ENCODE measurements at regions of chrX and their contacts with region 1.

Region 1: DNA sequence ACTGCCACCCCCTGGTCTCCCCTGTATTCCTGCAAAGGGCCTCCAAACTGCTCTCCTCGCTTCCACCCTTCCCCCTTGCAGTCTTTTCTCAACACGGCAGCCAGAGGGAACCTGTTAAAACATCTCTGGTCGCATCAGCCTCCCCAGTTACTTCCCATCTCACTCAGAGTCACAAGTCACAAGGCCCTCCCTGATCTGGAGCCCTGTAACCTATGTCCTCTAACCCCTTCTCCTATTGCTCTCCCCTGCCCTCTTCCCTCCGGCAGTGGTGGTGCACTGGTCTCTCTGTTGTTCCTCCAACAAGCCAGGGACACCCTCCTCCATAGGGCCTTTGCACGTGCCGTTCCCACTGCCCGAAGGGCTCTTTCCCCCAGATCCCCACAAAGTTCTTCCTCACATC is 73.2 kb downstream of the SH3KBP1 start:
- DNase-seq: peak; percentile 19 to 38
- H3K4me3 ChIP-seq: no peak overlapping the region
- H3K4me3 Mint-ChIP-seq: no peak overlapping the region
- H3K27ac Mint-ChIP-seq: no peak overlapping the region
- H3K4me1 ChIP-seq: no peaks in the 10 kb centered on the region
- H3K4me1 Mint-ChIP-seq: peaks cover 7% of the 10 kb centered on the region
- H3K27me3 ChIP-seq: no peaks in the 10 kb centered on the region
- H3K27me3 Mint-ChIP-seq: no peaks in the 10 kb centered on the region
- CTCF ChIP-seq: peak in 1 of 2 experiments; percentile 47

Region 2: GRCh38 chrX:19659925-19660324 is 154.3 kb before region 1 on chrX:
- CTCF ChIA-PET with region 1: no interaction called
- POLR2A ChIA-PET with region 1: no interaction called
- intact Hi-C with region 1: no loop called
- DNase-seq: no peak
- H3K4me3 ChIP-seq: no peak overlapping the region
- H3K4me3 Mint-ChIP-seq: no peak overlapping the region
- H3K27ac Mint-ChIP-seq: no peak overlapping the region
- H3K4me1 ChIP-seq: no peaks in the 10 kb centered on the region
- H3K4me1 Mint-ChIP-seq: peaks cover 5% of the 10 kb centered on the region
- H3K27me3 ChIP-seq: no peaks in the 10 kb centered on the region
- H3K27me3 Mint-ChIP-seq: no peaks in the 10 kb centered on the region
- CTCF ChIP-seq: no peak

Region 3: DNA sequence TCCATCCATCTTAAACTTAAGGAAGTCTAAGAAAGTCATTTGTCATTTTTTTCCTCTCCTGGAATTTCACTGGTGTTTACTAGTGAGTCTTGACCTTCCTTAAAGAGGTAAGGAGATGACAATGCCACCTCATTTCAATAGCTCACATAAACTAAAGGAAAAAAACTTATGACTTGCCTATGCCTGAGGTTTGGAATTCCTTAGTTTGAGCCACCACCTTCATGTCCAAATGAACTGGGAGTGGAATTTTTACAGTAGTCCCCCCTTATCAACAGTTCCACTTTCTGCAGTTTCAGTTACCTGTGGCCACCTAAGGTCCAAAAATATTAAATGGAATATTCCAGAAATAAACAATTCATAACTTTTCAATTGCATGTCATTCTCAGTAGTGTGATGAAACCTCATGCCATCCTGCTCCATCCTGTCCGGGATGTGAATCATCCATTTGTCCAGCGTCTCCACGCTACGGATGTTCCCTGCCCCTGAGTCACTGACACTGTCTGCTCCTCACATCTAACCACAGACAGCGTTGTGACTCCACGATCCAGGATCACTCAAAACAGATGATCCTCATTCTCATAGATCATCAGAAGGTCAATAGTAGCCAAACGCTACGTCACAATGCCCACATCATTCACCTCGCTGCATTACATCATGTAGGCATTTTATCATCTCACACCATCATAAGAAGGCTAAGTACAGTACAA is 104.3 kb before region 1 on chrX:
- CTCF ChIA-PET with region 1: no interaction called
- POLR2A ChIA-PET with region 1: no interaction called
- intact Hi-C with region 1: no loop called
- DNase-seq: no peak
- H3K4me3 ChIP-seq: no peak overlapping the region
- H3K4me3 Mint-ChIP-seq: no peak overlapping the region
- H3K27ac Mint-ChIP-seq: no peak overlapping the region
- H3K4me1 ChIP-seq: no peaks in the 10 kb centered on the region
- H3K4me1 Mint-ChIP-seq: no peaks in the 10 kb centered on the region
- H3K27me3 ChIP-seq: no peaks in the 10 kb centered on the region
- H3K27me3 Mint-ChIP-seq: no peaks in the 10 kb centered on the region
- CTCF ChIP-seq: no peak

Region 4: GRCh38 chrX:19739683-19740082 is 74.6 kb before region 1 on chrX:
- CTCF ChIA-PET with region 1: no interaction called
- POLR2A ChIA-PET with region 1: no interaction called
- intact Hi-C with region 1: loop called (anchors 1 kb)
- DNase-seq: peak; percentile 60 to 71
- H3K4me3 ChIP-seq: no peak overlapping the region
- H3K4me3 Mint-ChIP-seq: peak overlapping the region; percentile 41
- H3K27ac Mint-ChIP-seq: peak overlapping the region; percentile 85
- H3K4me1 ChIP-seq: peaks cover 17% of the 10 kb centered on the region
- H3K4me1 Mint-ChIP-seq: peaks cover 25% of the 10 kb centered on the region
- H3K27me3 ChIP-seq: no peaks in the 10 kb centered on the region
- H3K27me3 Mint-ChIP-seq: no peaks in the 10 kb centered on the region
- CTCF ChIP-seq: peak; percentile 54 to 69